ENCODE measurements at regions of chr15 and their contacts with region 1.

Region 1: DNA sequence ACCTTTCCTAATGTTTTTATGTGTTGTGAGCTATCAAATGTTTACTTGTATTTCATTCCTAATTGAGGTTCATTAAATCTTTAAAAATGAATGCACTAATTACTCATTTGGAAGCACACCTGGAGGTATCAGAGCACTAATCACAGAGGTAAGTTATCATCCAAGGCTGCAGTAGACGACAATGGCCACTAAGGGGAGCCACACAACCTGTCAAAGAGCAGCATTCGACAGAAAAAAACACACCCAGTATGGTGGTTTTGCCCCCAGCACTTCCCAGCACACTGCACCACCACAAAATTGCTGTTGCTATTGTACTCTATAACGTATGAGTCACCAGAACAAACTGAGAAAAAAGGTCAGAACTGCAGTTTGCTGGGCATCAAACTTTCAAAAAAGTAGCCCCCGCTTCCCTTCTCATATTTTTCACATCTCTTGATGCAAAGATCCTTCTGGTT is 205.9 kb upstream of the IGF1R start:
- DNase-seq: no peak
- ATAC-seq: peak in 1 of 8 donors; percentile 70
- H3K4me3 ChIP-seq: no peak overlapping the region
- H3K27ac ChIP-seq: no peak overlapping the region
- H3K4me1 ChIP-seq: no peaks in the 10 kb centered on the region
- H3K27me3 ChIP-seq: peaks cover 0 to 39% (median 13%) of the 10 kb centered on the region in 7 donors
- CTCF ChIP-seq: peak; percentile 51 to 77 (median 72)

Region 2: GRCh38 chr15:98597666-98598065 is 155.3 kb after region 1 on chr15:
- intact Hi-C with region 1: no loop called
- DNase-seq: no peak
- ATAC-seq: no peak
- H3K4me3 ChIP-seq: no peak overlapping the region
- H3K27ac ChIP-seq: no peak overlapping the region
- H3K4me1 ChIP-seq: peaks cover 0 to 12% (median 0%) of the 10 kb centered on the region in 9 donors
- H3K27me3 ChIP-seq: peaks cover 0 to 67% (median 40%) of the 10 kb centered on the region in 7 donors
- CTCF ChIP-seq: no peak

Region 3: GRCh38 chr15:99085413-99086326 is 643.3 kb after region 1 on chr15:
- intact Hi-C with region 1: loop called in 1 of 10 experiments (anchors 10 kb)
- DNase-seq: no peak
- ATAC-seq: no peak
- H3K4me3 ChIP-seq: no peak overlapping the region
- H3K27ac ChIP-seq: no peak overlapping the region
- H3K4me1 ChIP-seq: no peaks in the 10 kb centered on the region
- H3K27me3 ChIP-seq: peaks cover 0 to 3% (median 0%) of the 10 kb centered on the region in 7 donors
- CTCF ChIP-seq: no peak

Measured in heart right ventricle (tissue), 16 donors.